ENCODE measurements at regions of chr11 and their contacts with region 1.

Region 1: DNA sequence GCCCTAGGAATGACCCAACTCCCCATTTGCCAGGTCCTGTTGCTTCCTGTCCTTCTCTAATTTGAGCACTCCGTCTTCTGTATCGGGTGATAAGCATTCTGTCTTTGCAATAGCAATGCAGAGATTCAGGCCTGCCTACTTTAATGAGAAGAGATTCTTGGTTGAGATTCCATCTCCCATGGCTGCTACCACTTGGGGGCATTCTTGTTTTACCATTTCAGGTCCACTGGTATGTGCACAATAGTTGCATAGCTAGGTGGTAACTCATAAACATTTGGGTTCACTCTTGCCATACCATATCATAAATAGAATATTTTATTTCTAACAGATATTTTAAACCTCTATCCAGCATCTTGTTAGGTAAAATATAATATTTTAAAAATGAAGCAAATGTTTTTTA is 34.4 kb upstream of the CALCB start:
- DNase-seq: no peak
- H3K4me3 Mint-ChIP-seq: no peak overlapping the region
- H3K27ac Mint-ChIP-seq: no peak overlapping the region
- H3K4me1 Mint-ChIP-seq: no peaks in the 10 kb centered on the region
- H3K27me3 Mint-ChIP-seq: peaks cover 7% of the 10 kb centered on the region

Region 2: GRCh38 chr11:14784230-14784629 is 254.7 kb before region 1 on chr11:
- CTCF ChIA-PET with region 1: no interaction called
- POLR2A ChIA-PET with region 1: no interaction called
- intact Hi-C with region 1: no loop called
- DNase-seq: no peak
- H3K4me3 Mint-ChIP-seq: no peak overlapping the region
- H3K27ac Mint-ChIP-seq: no peak overlapping the region
- H3K4me1 Mint-ChIP-seq: peaks cover 34% of the 10 kb centered on the region
- H3K27me3 Mint-ChIP-seq: no peaks in the 10 kb centered on the region

Region 3: GRCh38 chr11:15159085-15159484 is 120.1 kb after region 1 on chr11:
- CTCF ChIA-PET with region 1: no interaction called
- POLR2A ChIA-PET with region 1: no interaction called
- intact Hi-C with region 1: no loop called
- DNase-seq: no peak
- H3K4me3 Mint-ChIP-seq: no peak overlapping the region
- H3K27ac Mint-ChIP-seq: no peak overlapping the region
- H3K4me1 Mint-ChIP-seq: no peaks in the 10 kb centered on the region
- H3K27me3 Mint-ChIP-seq: peaks cover 5% of the 10 kb centered on the region

Region 4: DNA sequence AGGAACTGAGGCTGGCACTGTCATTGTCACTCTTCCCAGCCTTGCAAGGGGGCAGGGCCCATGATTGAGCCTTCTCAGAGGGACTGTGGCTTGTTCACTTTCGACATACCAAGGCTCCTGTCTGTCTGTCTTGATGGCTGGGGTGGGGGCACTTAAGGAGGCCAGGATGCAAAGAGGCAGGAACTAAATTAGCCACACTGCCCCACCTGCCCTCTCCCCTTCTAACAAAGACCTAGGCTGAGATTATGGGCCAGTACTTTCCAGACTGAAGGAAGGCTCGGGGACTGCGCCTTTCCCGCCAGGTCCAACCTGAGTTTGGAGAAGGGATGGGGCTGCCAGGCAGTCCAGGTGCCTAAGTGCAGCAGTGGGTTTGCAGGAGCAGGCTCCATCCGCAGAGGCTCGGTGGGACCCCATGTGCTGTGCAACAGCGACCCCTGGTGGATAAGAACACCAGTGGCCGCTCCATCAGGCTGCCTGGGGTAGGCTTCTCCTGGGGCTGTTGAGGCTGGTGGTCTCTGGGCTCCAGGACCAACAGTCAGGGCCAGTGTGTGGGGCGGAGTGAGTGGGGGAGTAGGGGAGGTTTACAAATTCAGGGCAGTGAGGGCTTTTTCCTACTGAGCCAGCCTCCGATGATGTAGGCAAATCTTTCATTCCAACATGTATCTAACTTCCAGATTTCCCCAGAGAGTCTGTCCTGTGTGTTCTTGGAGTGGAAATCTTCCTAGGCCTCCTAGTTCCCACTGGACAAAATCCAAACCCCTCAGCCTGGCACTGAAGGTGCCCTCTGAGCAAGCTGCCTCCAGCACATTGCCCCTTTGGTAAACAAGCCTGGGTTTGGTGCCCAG is 169.6 kb after region 1 on chr11:
- CTCF ChIA-PET with region 1: no interaction called
- POLR2A ChIA-PET with region 1: no interaction called
- intact Hi-C with region 1: loop called (anchors 1 kb)
- DNase-seq: peak; percentile 79
- H3K4me3 Mint-ChIP-seq: no peak overlapping the region
- H3K27ac Mint-ChIP-seq: no peak overlapping the region
- H3K4me1 Mint-ChIP-seq: no peaks in the 10 kb centered on the region
- H3K27me3 Mint-ChIP-seq: peaks cover 2% of the 10 kb centered on the region